GM12878 (cell line): ENCODE measurements at regions of chr13 and their contacts with region 1.

Region 1: GRCh38 chr13:45047394-45048310 is 58.3 kb downstream of the GPALPP1 start:
- DNase-seq: peak; percentile 24
- ATAC-seq: peak; percentile 96
- H3K4me3 ChIP-seq: peak overlapping the region; percentile 28; the same call in 1 of the 2 replicates
- H3K27ac ChIP-seq: no peak overlapping the region
- H3K4me1 ChIP-seq: peaks cover 10% of the 10 kb centered on the region
- H3K27me3 ChIP-seq: no peaks in the 10 kb centered on the region
- CTCF ChIP-seq: peak; percentile 94 to 99 (median 95); a peak in 5 of 6 replicates
- EP300 ChIP-seq: no peak
- POLR2A ChIP-seq: no peak
- RAD21 ChIP-seq: peak; percentile 91

Region 2: DNA sequence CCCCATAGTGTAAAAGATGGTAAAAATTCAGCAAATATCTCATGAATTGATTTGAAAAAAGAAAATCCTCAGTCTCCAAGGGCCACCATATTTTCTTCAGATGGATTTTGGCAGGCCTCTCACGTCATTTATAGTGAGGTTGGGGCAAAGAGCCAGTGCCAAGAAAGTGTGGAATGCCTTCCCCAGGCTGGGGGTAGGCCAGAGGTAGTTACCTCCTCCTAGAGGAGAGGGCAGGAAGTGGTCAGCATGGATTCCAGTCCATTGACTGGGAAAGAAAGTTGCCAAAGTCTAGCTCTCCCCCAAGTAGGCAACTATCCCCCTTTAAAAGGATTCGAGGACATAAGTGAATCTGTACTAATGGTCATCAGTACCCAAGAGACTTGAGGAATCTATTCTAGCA is 221.6 kb after region 1 on chr13:
- CTCF ChIA-PET with region 1: interaction called, 11 read pairs
- POLR2A ChIA-PET with region 1: no interaction called
- RAD21 ChIA-PET with region 1: no interaction called
- SMC1A ChIA-PET with region 1: no interaction called
- in situ Hi-C with region 1: no loop called
- intact Hi-C with region 1: no loop called
- DNase-seq: no peak
- ATAC-seq: no peak
- H3K4me3 ChIP-seq: no peak overlapping the region
- H3K27ac ChIP-seq: no peak overlapping the region
- H3K4me1 ChIP-seq: no peaks in the 10 kb centered on the region
- H3K27me3 ChIP-seq: no peaks in the 10 kb centered on the region
- CTCF ChIP-seq: no peak
- EP300 ChIP-seq: no peak
- POLR2A ChIP-seq: no peak
- RAD21 ChIP-seq: no peak

Region 3: DNA sequence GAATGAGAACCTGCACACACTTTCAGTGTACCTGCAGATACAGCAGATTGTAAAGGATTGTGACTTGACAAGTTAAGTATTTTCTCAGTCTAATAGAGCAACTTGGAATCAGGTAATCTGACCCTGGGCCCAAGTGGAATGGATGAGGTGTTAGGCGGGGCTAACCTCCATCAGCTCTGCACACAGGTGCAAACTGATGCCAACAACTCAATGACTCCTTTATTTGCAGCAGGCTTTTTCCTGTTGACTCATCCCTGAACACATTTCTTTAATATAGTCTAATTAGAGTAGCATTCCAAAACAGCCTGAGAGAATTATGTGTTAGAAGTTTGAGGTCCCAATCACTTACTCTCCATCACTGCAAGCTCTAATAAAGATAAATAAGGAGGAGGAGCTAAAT is 244.5 kb after region 1 on chr13:
- CTCF ChIA-PET with region 1: interaction called, 13 read pairs
- POLR2A ChIA-PET with region 1: no interaction called
- RAD21 ChIA-PET with region 1: interaction called, 4 read pairs
- SMC1A ChIA-PET with region 1: interaction called, 9 read pairs
- in situ Hi-C with region 1: no loop called
- intact Hi-C with region 1: no loop called
- DNase-seq: no peak
- ATAC-seq: no peak
- H3K4me3 ChIP-seq: no peak overlapping the region
- H3K27ac ChIP-seq: no peak overlapping the region
- H3K4me1 ChIP-seq: no peaks in the 10 kb centered on the region
- H3K27me3 ChIP-seq: no peaks in the 10 kb centered on the region
- CTCF ChIP-seq: no peak
- EP300 ChIP-seq: no peak
- POLR2A ChIP-seq: no peak
- RAD21 ChIP-seq: no peak

Region 4: GRCh38 chr13:45310341-45311125 is 262.9 kb after region 1 on chr13:
- CTCF ChIA-PET with region 1: interaction called, 108 read pairs
- POLR2A ChIA-PET with region 1: no interaction called
- RAD21 ChIA-PET with region 1: interaction called, 43 read pairs
- SMC1A ChIA-PET with region 1: interaction called, 75 read pairs
- in situ Hi-C with region 1: loop called (anchors 5 kb)
- intact Hi-C with region 1: loop called (anchors 1 kb)
- DNase-seq: no peak
- ATAC-seq: peak; percentile 48; the same call in 2 of the 3 replicates
- H3K4me3 ChIP-seq: peak overlapping the region; percentile 32; the same call in 1 of the 2 replicates
- H3K27ac ChIP-seq: no peak overlapping the region
- H3K4me1 ChIP-seq: peaks cover 3% of the 10 kb centered on the region
- H3K27me3 ChIP-seq: no peaks in the 10 kb centered on the region; a peak in 1 of 4 replicates
- CTCF ChIP-seq: no peak
- EP300 ChIP-seq: no peak
- POLR2A ChIP-seq: no peak
- RAD21 ChIP-seq: no peak

Region 5: DNA sequence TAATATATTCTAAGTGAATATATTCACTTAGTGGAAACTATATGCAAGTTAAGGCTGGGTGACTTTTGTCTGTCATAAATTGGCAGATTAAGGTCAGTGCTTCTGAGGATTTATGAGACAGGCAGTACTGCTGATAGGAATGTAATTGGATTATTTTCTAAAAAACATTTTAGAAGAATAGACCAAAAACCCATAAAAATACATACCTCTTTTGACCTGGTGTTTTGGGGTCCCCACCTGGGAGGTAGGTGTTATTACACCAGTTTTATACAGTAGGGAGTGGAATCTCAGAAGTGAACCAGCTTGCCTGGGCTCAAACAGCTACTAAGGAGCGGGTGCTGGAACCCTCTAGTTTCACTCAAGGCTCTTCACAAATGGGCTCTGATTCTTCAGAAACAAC is 442.4 kb after region 1 on chr13:
- CTCF ChIA-PET with region 1: no interaction called
- POLR2A ChIA-PET with region 1: no interaction called
- RAD21 ChIA-PET with region 1: no interaction called
- SMC1A ChIA-PET with region 1: no interaction called
- in situ Hi-C with region 1: no loop called
- intact Hi-C with region 1: loop called (anchors 5 kb)
- DNase-seq: no peak
- ATAC-seq: peak; percentile 88
- H3K4me3 ChIP-seq: no peak overlapping the region
- H3K27ac ChIP-seq: no peak overlapping the region
- H3K4me1 ChIP-seq: no peaks in the 10 kb centered on the region
- H3K27me3 ChIP-seq: no peaks in the 10 kb centered on the region
- CTCF ChIP-seq: peak; percentile 29 to 55 (median 47); a peak in 5 of 6 replicates
- EP300 ChIP-seq: no peak
- POLR2A ChIP-seq: no peak
- RAD21 ChIP-seq: peak; percentile 79